Ovary (tissue), 10 donors: ENCODE measurements at regions of chrX and their contacts with region 1.

Region 1: DNA sequence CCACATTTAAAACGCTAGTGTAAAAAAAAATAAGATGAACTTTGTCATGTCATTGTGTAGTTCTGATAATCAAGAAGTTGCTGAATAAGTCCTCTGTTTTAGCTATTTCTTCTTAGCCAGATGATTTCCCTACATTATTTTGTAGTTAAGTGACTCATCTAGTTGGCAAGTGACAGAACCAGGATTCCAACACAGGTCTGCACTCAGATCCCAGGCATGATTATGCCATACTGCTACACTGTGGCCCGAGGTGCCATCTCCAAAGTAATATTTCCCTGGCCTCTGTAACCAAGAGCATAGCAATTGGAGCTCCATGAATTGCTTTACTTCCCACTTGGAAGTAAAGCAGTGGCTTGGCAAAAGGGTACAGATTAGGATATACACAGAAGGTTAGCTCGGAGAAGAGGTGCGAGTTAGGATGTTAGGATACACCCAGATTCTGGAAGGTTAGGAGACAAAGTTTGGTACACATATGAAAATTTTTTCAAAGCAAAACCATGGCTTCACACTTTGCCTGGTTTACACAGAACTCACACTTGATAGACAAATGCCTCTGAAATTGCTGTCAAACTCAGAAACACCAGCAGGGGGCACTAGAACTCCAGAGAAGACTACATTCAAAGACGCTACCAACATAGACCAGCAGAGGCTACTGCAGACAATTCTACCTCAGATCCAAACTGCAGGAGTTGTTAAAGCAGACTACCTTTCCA is 41.4 kb downstream of the SRPX2 start:
- DNase-seq: peak in 4 of 5 donors; percentile 50 to 78 (median 57)
- H3K4me3 ChIP-seq: no peak overlapping the region
- H3K27ac ChIP-seq: no peak overlapping the region
- H3K4me1 ChIP-seq: no peaks in the 10 kb centered on the region
- H3K27me3 ChIP-seq: no peaks in the 10 kb centered on the region
- CTCF ChIP-seq: peak; percentile 37 to 93 (median 88)
- EP300 ChIP-seq: no peak
- POLR2A ChIP-seq: no peak

Region 2: DNA sequence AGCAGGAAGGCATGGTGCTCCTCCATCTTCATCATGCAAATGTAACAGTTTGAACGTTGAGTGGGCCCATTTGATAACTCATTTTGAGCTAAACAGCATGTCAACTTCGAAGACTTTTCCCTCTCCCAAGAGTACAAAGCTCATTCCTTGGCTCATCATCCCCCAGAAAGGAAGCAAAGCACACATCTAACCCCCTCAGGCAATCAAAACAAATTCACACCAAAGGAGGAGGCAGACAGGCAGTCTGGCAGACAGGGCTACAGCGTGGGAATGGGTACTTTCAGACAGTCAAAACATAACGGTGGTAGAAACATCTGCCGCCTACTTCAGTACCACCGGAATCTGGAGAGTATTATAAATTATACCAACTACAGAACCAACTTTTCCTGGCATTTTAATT is 357.1 kb before region 1 on chrX:
- intact Hi-C with region 1: no loop called
- DNase-seq: no peak
- H3K4me3 ChIP-seq: no peak overlapping the region
- H3K27ac ChIP-seq: no peak overlapping the region
- H3K4me1 ChIP-seq: no peaks in the 10 kb centered on the region
- H3K27me3 ChIP-seq: no peaks in the 10 kb centered on the region
- CTCF ChIP-seq: no peak
- EP300 ChIP-seq: no peak
- POLR2A ChIP-seq: no peak

Region 3: GRCh38 chrX:100768679-100769338 is 83.4 kb after region 1 on chrX:
- intact Hi-C with region 1: loop called in 3 of 4 experiments (anchors 2 to 5 kb)
- DNase-seq: peak; percentile 74 to 92 (median 88)
- H3K4me3 ChIP-seq: no peak overlapping the region
- H3K27ac ChIP-seq: no peak overlapping the region
- H3K4me1 ChIP-seq: no peaks in the 10 kb centered on the region
- H3K27me3 ChIP-seq: no peaks in the 10 kb centered on the region
- CTCF ChIP-seq: peak; percentile 86 to 99 (median 98)
- EP300 ChIP-seq: no peak
- POLR2A ChIP-seq: no peak